Adrenal gland (tissue), 19 donors: ENCODE measurements at regions of chr22 and their contacts with region 1.

Region 1: DNA sequence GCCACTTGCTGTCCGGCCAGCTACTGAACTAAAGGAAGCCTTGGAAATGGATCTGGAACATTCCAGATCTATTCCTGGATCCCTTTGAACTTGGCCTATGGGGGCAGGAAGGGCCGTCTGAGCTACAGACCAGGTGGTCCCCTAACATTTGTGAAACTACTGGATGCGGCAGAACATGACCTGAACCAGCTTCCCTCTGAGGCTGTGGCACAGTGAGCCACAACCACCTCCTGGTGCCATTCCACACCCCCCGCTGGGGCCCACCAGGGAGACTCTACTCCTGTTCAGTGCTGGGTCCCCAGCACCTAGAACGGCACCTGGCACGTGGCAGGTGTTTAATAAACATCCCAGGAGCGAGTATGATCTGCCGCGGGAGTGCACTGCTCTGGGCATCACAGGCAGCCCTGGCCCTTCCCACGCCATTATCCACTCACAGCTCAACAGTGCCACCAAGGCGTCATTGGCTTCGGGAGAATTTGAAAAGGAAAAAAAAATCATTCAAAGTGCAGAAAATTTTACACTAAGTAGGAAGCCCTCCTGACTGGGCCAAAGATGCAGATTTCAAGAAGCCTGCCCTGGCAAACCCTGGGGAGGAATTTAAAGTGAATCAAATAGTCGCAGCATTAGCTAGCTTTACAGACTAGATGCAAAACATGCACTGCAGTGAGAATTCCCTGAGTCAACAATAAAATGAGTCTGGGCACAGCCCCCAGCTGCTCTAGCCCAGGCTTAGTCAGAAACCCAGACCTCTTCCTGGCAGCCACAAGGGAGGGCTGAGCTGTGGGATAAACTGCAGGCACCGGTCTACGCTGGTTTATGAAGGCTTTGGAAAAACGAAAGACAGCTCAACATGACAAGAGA is 14.3 kb upstream of the EFCAB6 start:
- DNase-seq: peak in 6 of 7 donors; percentile 21 to 62 (median 36)
- H3K4me3 ChIP-seq: no peak overlapping the region
- H3K27ac ChIP-seq: peak overlapping the region in 1 of 5 donors; percentile 23
- H3K4me1 ChIP-seq: no peaks in the 10 kb centered on the region
- H3K27me3 ChIP-seq: no peaks in the 10 kb centered on the region
- CTCF ChIP-seq: peak in 3 of 6 experiments; percentile 20 to 33 (median 25)
- POLR2A ChIP-seq: no peak

Region 2: GRCh38 chr22:43399338-43399979 is 426.9 kb before region 1 on chr22:
- intact Hi-C with region 1: loop called in 1 of 2 experiments (anchors 10 kb)
- DNase-seq: no peak
- H3K4me3 ChIP-seq: no peak overlapping the region
- H3K27ac ChIP-seq: no peak overlapping the region
- H3K4me1 ChIP-seq: no peaks in the 10 kb centered on the region
- H3K27me3 ChIP-seq: peaks cover 2% of the 10 kb centered on the region
- CTCF ChIP-seq: no peak
- POLR2A ChIP-seq: no peak

Region 3: GRCh38 chr22:43867839-43868652 is 41.7 kb after region 1 on chr22:
- intact Hi-C with region 1: no loop called
- DNase-seq: peak in 6 of 7 donors; percentile 49 to 69 (median 61)
- H3K4me3 ChIP-seq: no peak overlapping the region
- H3K27ac ChIP-seq: no peak overlapping the region
- H3K4me1 ChIP-seq: no peaks in the 10 kb centered on the region
- H3K27me3 ChIP-seq: peaks cover 5% of the 10 kb centered on the region
- CTCF ChIP-seq: peak in 2 of 6 experiments; percentile 3 to 5
- POLR2A ChIP-seq: no peak